Activated CD4-positive, alpha-beta T cell treated with anti-CD3 and anti-CD28 coated beads for 36 hours (primary cell): ENCODE measurements at regions of chr2 and their contacts with region 1.

Region 1: DNA sequence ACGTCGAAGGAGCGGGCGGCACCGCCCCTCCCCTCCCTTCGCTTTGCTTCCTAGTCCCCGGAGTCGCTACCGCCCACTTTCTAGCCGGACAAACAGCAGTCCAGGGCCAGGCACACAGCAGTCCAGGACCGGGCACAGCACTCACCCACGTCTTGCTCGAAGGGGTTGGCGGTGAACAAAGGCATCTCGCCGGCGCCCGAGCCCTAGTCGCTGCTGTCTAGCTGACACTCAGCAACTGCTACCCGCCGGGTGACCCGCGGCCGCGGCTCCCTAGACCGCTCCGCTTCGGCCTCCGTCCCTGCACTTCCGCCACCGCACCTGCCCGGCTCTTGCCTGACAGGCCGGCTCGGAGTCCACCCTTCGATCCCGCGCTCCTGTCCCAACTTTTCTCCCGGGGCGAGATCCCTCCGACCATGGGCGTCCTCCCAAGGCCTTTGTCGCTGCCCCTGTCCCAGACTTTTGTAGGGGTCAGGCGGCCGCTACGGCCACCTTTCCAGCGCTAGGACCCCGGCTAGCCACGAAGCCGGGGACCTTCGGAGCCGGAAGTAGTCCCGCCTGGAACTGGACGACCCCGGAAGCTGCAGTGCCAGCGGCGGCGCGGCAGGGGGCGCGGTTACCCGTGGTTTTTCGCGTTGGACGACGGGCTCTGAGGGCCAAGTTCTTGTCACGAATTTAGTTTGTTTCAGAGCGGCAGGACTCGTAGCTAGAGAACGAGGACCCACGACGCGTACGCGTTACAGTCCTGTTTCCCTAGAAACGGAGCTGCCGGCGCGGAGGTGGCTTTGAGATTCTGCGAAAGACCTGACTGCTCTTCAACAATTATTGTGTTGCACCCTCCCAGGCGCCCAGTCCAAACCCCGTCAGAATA is at the start of gene STAM2:
- DNase-seq: peak; percentile 96
- ATAC-seq: peak; percentile 88
- H3K4me3 Mint-ChIP-seq: peak within 1 kb of the TSS; percentile 95
- H3K27ac Mint-ChIP-seq: peak within 1 kb of the TSS; percentile 99
- H3K4me1 Mint-ChIP-seq: peaks cover 26% of the 10 kb centered on the region
- H3K27me3 Mint-ChIP-seq: no peaks in the 10 kb centered on the region
- total RNA-seq, gene STAM2: 14.9 to 18.5 TPM

Region 2: DNA sequence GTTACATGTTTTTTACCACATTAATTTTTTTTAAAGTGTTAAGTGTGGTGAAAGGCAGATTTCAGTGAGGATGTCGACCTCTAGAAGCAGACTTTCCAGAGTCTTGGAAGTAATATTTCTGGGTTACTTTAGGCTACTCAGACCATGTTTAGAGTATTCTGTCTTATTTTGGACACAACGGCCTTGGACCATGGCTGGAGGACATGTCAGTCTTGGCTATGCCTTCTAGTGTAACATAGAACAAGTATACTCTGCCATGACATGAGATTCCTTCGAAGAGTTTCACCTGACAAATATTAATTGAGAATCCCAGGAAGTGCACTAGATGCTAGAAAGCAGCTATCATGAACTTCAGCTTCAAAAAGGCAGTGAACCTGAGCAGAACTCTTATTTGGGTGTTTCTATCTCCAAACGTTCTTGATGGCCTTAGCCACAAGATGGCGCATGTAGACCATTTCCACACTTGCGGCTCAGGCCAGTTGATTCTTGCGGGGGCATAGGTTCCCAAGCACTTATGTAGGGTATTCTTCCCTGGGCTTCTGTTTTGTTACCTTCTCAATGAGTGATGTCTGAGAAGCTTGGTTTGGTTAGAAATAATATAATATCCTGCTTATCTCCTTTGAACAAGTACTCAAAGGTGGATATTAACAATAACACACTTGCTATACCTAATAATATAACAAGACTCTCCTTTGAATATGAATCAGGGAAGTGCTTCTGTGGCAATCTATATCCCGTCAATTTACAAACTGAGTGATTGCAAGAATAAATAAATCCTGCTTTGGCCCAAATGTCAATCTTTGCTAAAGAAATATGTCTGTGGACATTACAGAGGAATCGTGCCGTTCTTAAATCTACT is 138.9 kb before region 1 on chr2:
- CTCF ChIA-PET with region 1: no interaction called
- POLR2A ChIA-PET with region 1: no interaction called
- intact Hi-C with region 1: loop called (anchors 1 to 2 kb)
- DNase-seq: peak; percentile 77
- ATAC-seq: peak; percentile 42
- H3K4me3 Mint-ChIP-seq: no peak overlapping the region
- H3K27ac Mint-ChIP-seq: no peak overlapping the region
- H3K4me1 Mint-ChIP-seq: no peaks in the 10 kb centered on the region
- H3K27me3 Mint-ChIP-seq: peaks cover 2% of the 10 kb centered on the region

Region 3: DNA sequence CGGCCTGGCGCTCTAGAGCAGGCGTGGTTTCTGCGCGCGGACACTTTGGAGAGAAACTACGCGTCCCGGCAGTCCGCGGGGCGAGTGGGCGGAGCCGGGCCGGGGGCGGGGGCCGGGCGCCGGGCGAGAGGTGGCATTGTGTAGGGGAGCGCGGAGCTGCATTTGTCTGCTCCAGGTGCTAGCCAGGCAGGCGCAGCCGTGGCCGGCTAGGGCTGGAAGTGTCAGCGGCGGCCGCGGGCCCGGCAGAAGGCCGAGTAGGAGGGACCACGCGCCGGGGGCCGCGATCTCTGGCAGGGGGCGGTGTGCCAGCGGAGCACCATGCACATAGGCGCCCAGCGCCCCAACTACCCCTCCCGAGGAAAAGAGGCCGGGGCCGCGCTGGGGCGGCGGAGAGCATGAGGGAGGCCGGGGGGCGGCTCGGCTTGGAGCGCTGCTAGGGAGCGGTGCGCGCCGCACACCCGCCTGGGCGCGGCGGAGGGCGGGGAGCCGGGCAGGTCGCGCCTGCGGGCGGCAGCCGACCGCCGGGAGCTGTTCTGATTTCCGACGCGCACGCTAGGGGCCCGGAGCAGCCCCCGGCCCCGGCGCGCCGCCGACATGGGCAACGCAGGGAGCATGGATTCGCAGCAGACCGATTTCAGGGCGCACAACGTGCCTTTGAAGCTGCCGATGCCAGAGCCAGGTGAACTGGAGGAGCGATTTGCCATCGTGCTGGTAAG is 159.5 kb after region 1 on chr2 and contains the start of gene FMNL2:
- CTCF ChIA-PET with region 1: no interaction called
- POLR2A ChIA-PET with region 1: no interaction called
- intact Hi-C with region 1: loop called (anchors 1 to 5 kb)
- DNase-seq: peak; percentile 80
- ATAC-seq: peak; percentile 83
- H3K4me3 Mint-ChIP-seq: peak within 1 kb of the TSS; percentile 73
- H3K27ac Mint-ChIP-seq: no peak within 1 kb of the TSS
- H3K4me1 Mint-ChIP-seq: peaks cover 11% of the 10 kb centered on the region
- H3K27me3 Mint-ChIP-seq: peaks cover 44% of the 10 kb centered on the region
- total RNA-seq, gene FMNL2: 3.0 to 3.3 TPM

Region 4: DNA sequence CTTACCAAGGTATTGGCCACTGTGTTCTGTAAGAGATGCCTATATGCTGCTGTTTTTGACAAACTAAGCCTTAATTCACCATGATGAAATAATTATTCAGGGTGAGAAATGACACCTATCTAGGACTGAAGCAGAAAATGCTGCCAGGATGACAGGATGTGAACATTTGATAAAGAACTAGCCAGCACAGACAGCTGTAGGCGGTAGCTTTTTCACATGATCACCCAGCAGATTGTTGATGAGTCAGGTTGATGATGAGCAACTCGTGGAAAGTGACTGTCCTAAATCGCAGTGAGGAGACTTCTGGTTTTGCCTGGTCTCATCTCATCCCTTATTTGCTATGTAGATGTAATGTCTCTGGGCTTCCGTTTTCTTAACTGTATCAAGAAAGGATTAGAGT is 397.5 kb after region 1 on chr2:
- CTCF ChIA-PET with region 1: interaction called, 3 read pairs
- POLR2A ChIA-PET with region 1: no interaction called
- intact Hi-C with region 1: loop called in 1 of 2 experiments (anchors 5 kb)
- DNase-seq: peak; percentile 73
- ATAC-seq: peak; percentile 97
- H3K4me3 Mint-ChIP-seq: no peak overlapping the region
- H3K27ac Mint-ChIP-seq: peak overlapping the region; percentile 52
- H3K4me1 Mint-ChIP-seq: peaks cover 8% of the 10 kb centered on the region
- H3K27me3 Mint-ChIP-seq: peaks cover 2% of the 10 kb centered on the region

Region 5: DNA sequence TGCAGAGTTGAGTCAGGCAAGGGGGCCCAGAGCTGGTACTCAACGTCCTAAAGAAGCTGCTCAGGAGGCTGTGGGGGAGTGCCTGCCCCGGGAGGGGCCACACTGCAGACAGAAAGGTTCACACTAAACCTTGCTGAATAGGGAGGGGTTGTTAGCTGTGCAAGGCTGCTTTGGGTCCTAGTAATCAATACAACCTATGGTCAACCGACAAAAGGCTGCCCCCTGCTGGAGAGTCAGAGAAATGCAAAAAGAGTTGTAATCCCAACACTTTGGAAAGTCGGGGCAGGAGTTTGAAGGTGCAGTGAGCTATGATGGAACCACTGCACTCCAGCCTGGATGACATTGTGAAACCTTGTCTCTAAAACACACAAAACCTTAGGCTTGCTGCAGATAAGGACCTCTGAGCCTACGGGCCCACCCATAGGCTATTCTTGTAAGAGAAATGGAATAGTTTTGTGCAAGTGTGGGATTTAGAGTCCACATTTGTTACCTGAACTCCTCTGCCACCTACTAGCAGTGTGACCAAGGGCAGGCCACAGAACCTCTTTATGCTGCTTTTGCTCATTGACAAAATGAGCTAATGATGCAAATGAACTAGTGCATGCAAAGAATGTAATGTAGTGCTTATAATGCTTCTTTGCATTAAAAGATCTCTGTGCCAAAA is 460.1 kb after region 1 on chr2:
- CTCF ChIA-PET with region 1: interaction called, 27 read pairs
- POLR2A ChIA-PET with region 1: no interaction called
- intact Hi-C with region 1: loop called (anchors 1 kb)
- DNase-seq: peak; percentile 81
- ATAC-seq: peak; percentile 65
- H3K4me3 Mint-ChIP-seq: no peak overlapping the region
- H3K27ac Mint-ChIP-seq: no peak overlapping the region
- H3K4me1 Mint-ChIP-seq: no peaks in the 10 kb centered on the region
- H3K27me3 Mint-ChIP-seq: peaks cover 2% of the 10 kb centered on the region

Region 6: GRCh38 chr2:153077311-153077710 is 901.6 kb after region 1 on chr2:
- CTCF ChIA-PET with region 1: no interaction called
- POLR2A ChIA-PET with region 1: no interaction called
- intact Hi-C with region 1: no loop called
- DNase-seq: no peak
- ATAC-seq: no peak
- H3K4me3 Mint-ChIP-seq: no peak overlapping the region
- H3K27ac Mint-ChIP-seq: no peak overlapping the region
- H3K4me1 Mint-ChIP-seq: no peaks in the 10 kb centered on the region
- H3K27me3 Mint-ChIP-seq: no peaks in the 10 kb centered on the region